AG04449 (cell line): ENCODE measurements at regions of chr22 and their contacts with region 1.

Region 1: GRCh38 chr22:22327723-22328122 is 83.1 kb downstream of the VPREB1 start:
- DNase-seq: no peak
- H3K4me3 ChIP-seq: no peak overlapping the region
- CTCF ChIP-seq: no peak

Region 2: GRCh38 chr22:22316589-22316988 is 11.1 kb before region 1 on chr22:
- CTCF ChIA-PET with region 1: interaction called, 14 read pairs
- POLR2A ChIA-PET with region 1: no interaction called
- DNase-seq: no peak
- H3K4me3 ChIP-seq: no peak overlapping the region
- CTCF ChIP-seq: no peak

Region 3: DNA sequence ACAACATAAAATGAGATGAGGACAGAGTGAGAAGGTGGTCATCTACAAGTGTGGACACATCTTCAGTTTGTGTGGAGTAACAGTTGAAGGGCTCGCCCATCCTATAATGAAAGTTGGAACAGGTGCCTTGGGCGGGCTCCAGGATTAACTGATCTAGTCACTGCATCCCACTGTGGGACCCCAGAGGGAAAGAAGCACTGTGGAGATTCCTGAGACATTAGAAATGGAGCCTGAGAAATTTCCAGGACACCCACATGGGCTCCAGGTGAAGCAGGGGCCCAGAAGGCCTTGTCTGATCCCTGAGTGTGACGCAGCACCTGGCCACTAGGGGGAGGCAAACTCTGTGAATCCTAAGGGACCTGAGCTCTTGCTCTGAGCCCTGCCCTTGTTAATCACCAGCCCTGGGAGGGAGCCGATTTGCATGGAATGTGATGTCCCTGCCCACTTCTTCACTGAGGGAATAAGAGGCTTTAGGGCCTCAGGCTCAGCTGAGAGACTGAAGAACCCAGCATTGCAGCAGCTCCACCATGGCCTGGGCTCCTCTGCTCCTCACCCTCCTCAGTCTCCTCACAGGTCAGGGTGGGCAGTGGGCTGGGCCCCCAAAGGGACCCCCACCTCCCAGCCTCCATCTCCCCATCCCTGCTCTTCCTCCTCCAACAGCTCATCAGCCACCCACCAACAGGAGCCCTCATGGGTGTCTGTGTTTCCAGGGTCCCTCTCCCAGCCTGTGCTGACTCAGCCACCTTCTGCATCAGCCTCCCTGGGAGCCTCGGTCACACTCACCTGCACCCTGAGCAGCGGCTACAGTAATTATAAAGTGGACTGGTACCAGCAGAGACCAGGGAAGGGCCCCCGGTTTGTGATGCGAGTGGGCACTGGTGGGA is 15.2 kb after region 1 on chr22:
- CTCF ChIA-PET with region 1: interaction called, 15 read pairs
- POLR2A ChIA-PET with region 1: no interaction called
- DNase-seq: no peak
- H3K4me3 ChIP-seq: no peak overlapping the region
- CTCF ChIP-seq: peak; percentile 78

Region 4: DNA sequence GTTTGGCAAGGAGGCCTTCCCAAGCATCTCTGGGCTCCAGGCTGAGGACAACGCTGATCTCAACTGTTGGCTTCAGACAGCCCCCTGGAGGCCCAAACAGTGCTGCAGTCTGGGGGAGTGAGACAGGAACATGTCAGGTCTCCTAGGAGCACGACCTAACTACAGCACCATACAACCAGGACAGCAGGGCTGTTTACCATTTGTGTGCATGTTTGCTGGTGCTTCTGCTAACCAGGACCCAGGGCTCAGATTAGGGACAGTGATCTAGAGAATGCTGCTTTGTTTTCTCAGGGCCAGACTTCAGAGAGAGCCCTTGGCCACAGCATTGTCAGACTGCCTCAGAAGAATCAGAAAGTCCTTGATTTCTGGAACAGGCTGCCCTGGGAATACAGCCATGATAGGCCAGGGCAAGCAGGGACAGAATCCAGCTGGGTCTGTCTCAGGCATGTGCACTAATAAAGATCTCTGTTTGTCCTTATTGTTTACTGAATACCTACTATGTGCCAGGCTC is 43.4 kb after region 1 on chr22:
- CTCF ChIA-PET with region 1: no interaction called
- POLR2A ChIA-PET with region 1: no interaction called
- DNase-seq: no peak
- H3K4me3 ChIP-seq: no peak overlapping the region
- CTCF ChIP-seq: peak; percentile 16